ENCODE measurements at regions of chr1 and their contacts with region 1.

Region 1: DNA sequence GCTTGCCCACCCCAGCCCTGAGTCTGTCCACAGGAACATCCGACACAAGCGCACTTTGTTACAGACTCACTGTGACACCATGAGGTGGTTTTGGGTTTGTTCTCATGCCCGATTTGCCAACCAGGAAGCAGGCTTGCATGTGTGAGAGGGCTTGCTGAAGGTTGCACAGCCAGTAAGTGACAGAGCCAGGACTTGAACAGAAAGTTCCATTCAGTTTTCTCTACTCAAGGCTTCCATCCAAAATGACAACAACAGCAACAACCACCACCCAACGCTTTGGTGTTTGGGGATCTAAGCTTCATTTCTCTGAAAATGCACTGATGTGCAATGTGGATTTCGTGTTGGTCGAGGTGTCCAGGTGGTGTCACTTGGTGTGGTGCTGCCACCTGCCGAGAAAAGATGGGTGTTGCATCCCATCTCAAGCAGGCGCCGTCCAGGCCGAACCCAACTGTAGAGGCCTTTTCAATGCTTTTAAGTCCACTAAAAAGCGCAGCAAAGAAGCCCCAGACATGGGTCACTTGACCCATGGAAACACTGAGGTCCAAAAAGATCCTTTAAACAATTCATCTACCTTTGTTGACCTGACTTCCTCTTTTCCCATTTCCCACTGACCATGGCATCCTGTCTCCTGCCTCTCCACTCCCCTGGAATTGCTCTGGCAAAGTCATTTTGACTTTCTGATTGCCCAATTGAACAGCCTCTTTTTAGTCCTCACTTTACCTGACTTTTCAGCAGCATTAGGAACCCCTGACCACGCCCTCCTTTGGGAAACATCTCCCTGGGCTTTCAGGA is 12.2 kb downstream of the CITED4 start:
- DNase-seq: peak; percentile 49
- ATAC-seq: peak; percentile 91
- H3K4me3 ChIP-seq: no peak overlapping the region
- H3K27ac ChIP-seq: no peak overlapping the region
- H3K4me1 ChIP-seq: no peaks in the 10 kb centered on the region
- H3K27me3 ChIP-seq: peaks cover 2% of the 10 kb centered on the region; the same call in 1 of the 2 replicates
- CTCF ChIP-seq: peak; percentile 87
- POLR2A ChIP-seq: no peak
- RAD21 ChIP-seq: peak; percentile 87

Region 2: DNA sequence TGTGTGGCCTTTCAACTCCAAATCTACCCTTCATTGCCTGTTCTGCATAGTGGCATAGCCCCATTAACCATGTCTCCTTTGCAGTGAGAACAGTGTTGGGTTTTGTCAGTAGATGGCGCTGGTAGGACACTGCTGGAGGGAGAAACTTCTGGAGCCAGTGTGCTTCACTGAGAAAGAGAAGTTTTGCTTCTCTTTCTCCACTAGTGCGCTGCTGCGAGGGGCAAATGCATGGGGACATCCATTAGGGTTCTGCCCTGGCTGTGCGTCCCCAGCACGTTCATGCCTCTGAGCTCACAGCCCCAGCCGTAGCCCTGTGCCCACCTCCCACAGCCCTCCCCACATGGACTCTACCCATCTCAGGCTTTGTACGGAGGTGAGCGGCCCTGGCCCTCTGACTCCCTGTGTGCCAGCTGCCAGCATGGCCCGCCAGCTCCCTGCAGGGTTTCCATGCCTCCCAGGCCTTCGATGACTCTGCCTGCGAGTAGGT is 237.6 kb before region 1 on chr1:
- CTCF ChIA-PET with region 1: interaction called, 3 read pairs
- POLR2A ChIA-PET with region 1: no interaction called
- dilution Hi-C with region 1: no loop called
- in situ Hi-C with region 1: no loop called
- intact Hi-C with region 1: loop called (anchors 1 kb)
- DNase-seq: peak; percentile 52
- ATAC-seq: peak; percentile 97
- H3K4me3 ChIP-seq: no peak overlapping the region
- H3K27ac ChIP-seq: no peak overlapping the region
- H3K4me1 ChIP-seq: no peaks in the 10 kb centered on the region
- H3K27me3 ChIP-seq: peaks cover 4% of the 10 kb centered on the region; the same call in 1 of the 2 replicates
- CTCF ChIP-seq: peak; percentile 84
- POLR2A ChIP-seq: no peak
- RAD21 ChIP-seq: peak; percentile 87

Region 3: GRCh38 chr1:40774266-40774998 is 75.6 kb before region 1 on chr1:
- CTCF ChIA-PET with region 1: no interaction called
- POLR2A ChIA-PET with region 1: no interaction called
- dilution Hi-C with region 1: no loop called
- in situ Hi-C with region 1: no loop called
- intact Hi-C with region 1: loop called (anchors 2 kb)
- DNase-seq: peak; percentile 20
- ATAC-seq: no peak; the same call in 1 of the 2 replicates
- H3K4me3 ChIP-seq: no peak overlapping the region
- H3K27ac ChIP-seq: no peak overlapping the region
- H3K4me1 ChIP-seq: peaks cover 3% of the 10 kb centered on the region; the same call in 1 of the 2 replicates
- H3K27me3 ChIP-seq: no peaks in the 10 kb centered on the region
- CTCF ChIP-seq: peak; percentile 55
- POLR2A ChIP-seq: no peak
- RAD21 ChIP-seq: peak; percentile 50

Region 4: GRCh38 chr1:40951943-40952743 is 102.1 kb after region 1 on chr1:
- CTCF ChIA-PET with region 1: interaction called, 30 read pairs
- POLR2A ChIA-PET with region 1: no interaction called
- dilution Hi-C with region 1: no loop called
- in situ Hi-C with region 1: loop called (anchors 5 kb)
- intact Hi-C with region 1: loop called (anchors 1 kb)
- DNase-seq: peak; percentile 29
- ATAC-seq: peak; percentile 83
- H3K4me3 ChIP-seq: no peak overlapping the region
- H3K27ac ChIP-seq: no peak overlapping the region
- H3K4me1 ChIP-seq: peaks cover 2% of the 10 kb centered on the region
- H3K27me3 ChIP-seq: no peaks in the 10 kb centered on the region
- CTCF ChIP-seq: peak; percentile 90
- POLR2A ChIP-seq: 0 out of 2 replicates have a peak, but pooled peaks have one; percentile 35
- RAD21 ChIP-seq: peak; percentile 97

Region 5: DNA sequence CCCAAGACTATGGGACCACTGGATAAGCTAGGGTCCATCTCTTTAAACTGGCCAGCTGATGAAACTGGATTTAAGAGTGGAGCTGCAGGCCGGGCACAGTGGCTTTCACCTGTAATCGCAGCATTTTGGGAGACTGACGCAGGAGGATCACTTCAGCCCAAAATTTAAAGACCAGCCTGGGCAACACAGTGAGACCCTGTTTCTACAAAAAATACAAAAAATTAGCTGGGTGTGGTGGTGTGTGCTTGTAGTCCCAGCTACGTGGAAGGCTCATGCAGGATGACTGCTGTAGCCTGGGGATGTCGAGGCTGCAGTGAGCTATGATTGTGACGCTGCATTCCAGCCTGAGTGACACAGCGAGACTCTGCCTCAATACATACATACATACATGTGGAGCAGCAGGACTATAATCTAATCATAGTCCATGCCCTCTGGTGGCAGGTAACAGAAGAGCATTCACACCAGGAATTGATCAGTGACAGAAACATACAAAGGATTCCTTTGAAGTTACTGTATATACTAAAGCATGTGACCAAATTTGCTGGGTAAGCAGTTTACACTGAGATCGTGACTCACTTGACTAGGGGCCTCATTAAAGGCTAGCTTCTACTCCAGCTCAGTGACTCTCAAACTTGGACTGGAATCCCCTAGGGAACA is 273.0 kb after region 1 on chr1:
- CTCF ChIA-PET with region 1: no interaction called
- POLR2A ChIA-PET with region 1: no interaction called
- dilution Hi-C with region 1: no loop called
- in situ Hi-C with region 1: no loop called
- intact Hi-C with region 1: loop called (anchors 5 kb)
- DNase-seq: peak; percentile 91
- ATAC-seq: peak; percentile 96
- H3K4me3 ChIP-seq: no peak overlapping the region
- H3K27ac ChIP-seq: no peak overlapping the region
- H3K4me1 ChIP-seq: peaks cover 7% of the 10 kb centered on the region
- H3K27me3 ChIP-seq: no peaks in the 10 kb centered on the region
- CTCF ChIP-seq: peak; percentile 59
- POLR2A ChIP-seq: no peak
- RAD21 ChIP-seq: peak; percentile 56